ENCODE measurements at regions of chr1 and their contacts with region 1.

Region 1: DNA sequence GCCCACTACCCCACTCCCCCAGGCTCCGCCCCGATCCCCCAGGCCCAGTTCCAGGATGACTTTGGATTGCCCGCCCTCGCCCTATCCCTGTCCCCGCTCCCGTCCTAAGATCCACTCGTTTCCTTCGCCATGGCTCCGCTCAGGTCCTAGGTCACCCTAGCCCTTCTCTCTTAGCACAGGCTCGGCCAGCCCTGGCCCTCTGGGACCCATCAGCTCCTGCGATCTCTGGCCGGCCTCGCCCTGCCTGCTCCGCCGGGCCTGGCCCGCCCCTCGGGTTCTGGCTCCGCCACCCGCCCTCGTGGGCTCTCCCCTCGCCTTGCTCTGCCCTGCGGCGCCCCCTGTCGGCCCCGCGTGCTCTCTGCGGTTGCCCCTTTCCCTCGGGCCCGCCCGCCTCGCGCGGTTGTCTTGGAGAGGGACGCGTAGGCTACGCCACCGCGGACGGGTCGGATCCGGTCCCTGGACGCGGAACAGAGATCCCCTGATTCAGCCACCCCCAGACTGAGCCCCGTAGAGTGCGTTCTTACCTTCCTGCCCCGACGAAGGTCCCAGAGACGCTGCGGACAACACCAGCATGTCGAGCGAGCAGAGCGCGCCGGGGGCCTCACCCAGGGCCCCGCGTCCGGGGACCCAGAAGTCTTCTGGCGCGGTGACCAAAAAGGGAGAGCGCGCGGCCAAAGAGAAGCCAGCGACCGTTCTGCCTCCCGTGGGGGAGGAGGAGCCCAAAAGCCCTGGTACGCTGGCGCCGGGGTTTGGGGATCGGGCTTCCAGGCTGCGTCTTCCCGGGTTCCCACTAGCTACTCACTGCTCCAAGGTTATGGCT is at the start of gene LRRC71:
- DNase-seq: peak; percentile 94
- ATAC-seq: peak; percentile 89
- H3K4me3 Mint-ChIP-seq: peak within 1 kb of the TSS; percentile 67
- H3K27ac Mint-ChIP-seq: no peak within 1 kb of the TSS
- H3K4me1 Mint-ChIP-seq: peaks cover 15% of the 10 kb centered on the region
- H3K27me3 Mint-ChIP-seq: peaks cover 96% of the 10 kb centered on the region
- CTCF ChIP-seq: peak; percentile 94
- total RNA-seq, gene LRRC71: 0.18 to 0.30 TPM (median 0.22 TPM) in 3 replicates

Region 2: GRCh38 chr1:156813750-156814570 is 106.5 kb before region 1 on chr1:
- CTCF ChIA-PET with region 1: interaction called, 12 read pairs
- POLR2A ChIA-PET with region 1: no interaction called
- DNase-seq: peak; percentile 87
- ATAC-seq: peak; percentile 88
- H3K4me3 Mint-ChIP-seq: peak overlapping the region; percentile 62
- H3K27ac Mint-ChIP-seq: no peak overlapping the region
- H3K4me1 Mint-ChIP-seq: peaks cover 22% of the 10 kb centered on the region
- H3K27me3 Mint-ChIP-seq: peaks cover 59% of the 10 kb centered on the region
- CTCF ChIP-seq: no peak

Region 3: DNA sequence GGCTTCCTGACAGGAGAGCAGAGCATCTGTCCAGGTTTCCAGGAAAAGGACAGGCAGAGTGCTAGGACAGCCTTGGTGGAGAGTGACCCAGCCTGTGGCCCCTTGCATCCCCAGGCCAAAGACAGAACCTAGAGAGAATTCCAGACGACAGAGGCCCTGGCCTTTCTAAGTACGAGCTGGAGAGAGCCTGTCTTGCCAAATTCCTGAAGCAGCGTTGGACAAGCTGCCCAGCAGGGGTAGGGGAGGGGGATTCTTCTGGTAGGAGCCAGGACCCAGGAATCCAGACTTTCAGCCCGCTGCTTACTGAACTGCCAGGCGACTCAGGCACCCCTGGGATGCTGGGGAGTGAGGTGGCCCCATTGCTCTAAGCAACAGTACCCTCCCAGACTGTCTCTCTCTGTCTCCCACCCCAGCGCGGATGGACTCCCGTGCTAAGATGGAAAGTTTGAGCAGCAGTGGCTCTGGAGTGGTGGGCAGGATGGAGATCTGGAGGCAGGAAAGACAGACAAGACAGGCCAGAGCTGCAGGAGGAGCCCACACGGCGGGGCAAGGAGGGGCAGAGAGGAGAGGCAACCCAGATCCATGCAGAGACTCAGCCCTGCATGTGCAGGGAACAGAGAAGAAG is 35.8 kb before region 1 on chr1:
- CTCF ChIA-PET with region 1: interaction called, 233 read pairs
- POLR2A ChIA-PET with region 1: no interaction called
- DNase-seq: no peak
- ATAC-seq: no peak; the same call in 1 of the 2 replicates
- H3K4me3 Mint-ChIP-seq: no peak overlapping the region
- H3K27ac Mint-ChIP-seq: no peak overlapping the region
- H3K4me1 Mint-ChIP-seq: peaks cover 30% of the 10 kb centered on the region
- H3K27me3 Mint-ChIP-seq: peaks cover 35% of the 10 kb centered on the region
- CTCF ChIP-seq: no peak

Region 4: GRCh38 chr1:156898161-156898566 is 22.3 kb before region 1 on chr1:
- CTCF ChIA-PET with region 1: interaction called, 233 read pairs
- POLR2A ChIA-PET with region 1: no interaction called
- DNase-seq: no peak
- ATAC-seq: no peak
- H3K4me3 Mint-ChIP-seq: no peak overlapping the region
- H3K27ac Mint-ChIP-seq: no peak overlapping the region
- H3K4me1 Mint-ChIP-seq: peaks cover 20% of the 10 kb centered on the region
- H3K27me3 Mint-ChIP-seq: peaks cover 37% of the 10 kb centered on the region
- CTCF ChIP-seq: no peak

Region 5: GRCh38 chr1:157025856-157026255 is 105.4 kb after region 1 on chr1:
- CTCF ChIA-PET with region 1: no interaction called
- POLR2A ChIA-PET with region 1: no interaction called
- DNase-seq: no peak
- ATAC-seq: no peak
- H3K4me3 Mint-ChIP-seq: no peak overlapping the region
- H3K27ac Mint-ChIP-seq: no peak overlapping the region
- H3K4me1 Mint-ChIP-seq: peaks cover 8% of the 10 kb centered on the region; the same call in 1 of the 2 replicates
- H3K27me3 Mint-ChIP-seq: no peaks in the 10 kb centered on the region
- CTCF ChIP-seq: no peak

Region 6: GRCh38 chr1:157073944-157074767 is 153.7 kb after region 1 on chr1:
- CTCF ChIA-PET with region 1: interaction called, 10 read pairs
- POLR2A ChIA-PET with region 1: no interaction called
- DNase-seq: peak; percentile 83
- ATAC-seq: peak; percentile 67
- H3K4me3 Mint-ChIP-seq: no peak overlapping the region
- H3K27ac Mint-ChIP-seq: no peak overlapping the region
- H3K4me1 Mint-ChIP-seq: peaks cover 9% of the 10 kb centered on the region
- H3K27me3 Mint-ChIP-seq: peaks cover 11% of the 10 kb centered on the region
- CTCF ChIP-seq: peak; percentile 46; the same call in 1 of the 2 replicates